Breast epithelium (tissue), 4 donors: ENCODE measurements at regions of chr2 and their contacts with region 1.

Region 1: DNA sequence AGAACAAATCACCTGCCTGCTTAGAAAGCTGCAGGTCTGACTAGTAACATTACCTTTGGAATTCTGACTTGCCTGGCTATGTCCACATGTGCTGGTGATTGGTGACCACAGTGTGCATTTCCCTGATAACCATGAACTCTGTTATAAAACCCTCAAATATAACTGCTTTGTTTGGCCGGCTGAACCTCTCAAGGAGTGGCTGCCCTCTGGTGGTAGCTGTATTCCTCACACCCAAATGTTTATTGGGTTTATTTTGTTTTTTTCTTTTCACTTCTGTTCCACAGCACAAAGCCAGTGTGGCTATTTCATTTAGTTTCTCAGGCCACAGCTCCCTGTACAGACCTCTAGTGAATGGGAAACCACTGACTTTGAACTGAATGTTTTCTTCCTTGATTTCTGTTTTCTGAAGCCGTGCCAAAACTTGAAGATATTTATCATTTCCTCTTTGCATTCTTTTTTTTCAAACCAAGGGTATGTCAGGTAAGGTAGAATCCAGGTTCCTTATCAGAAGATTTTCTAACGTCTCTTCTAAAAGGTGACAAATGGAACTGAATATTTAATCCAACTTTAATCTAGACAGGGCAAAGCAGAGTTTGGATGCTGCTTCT is 549.0 kb upstream of the VRK2 start:
- DNase-seq: no peak
- H3K4me3 ChIP-seq: no peak overlapping the region
- H3K27ac ChIP-seq: no peak overlapping the region
- H3K4me1 ChIP-seq: no peaks in the 10 kb centered on the region
- H3K27me3 ChIP-seq: no peaks in the 10 kb centered on the region
- CTCF ChIP-seq: peak; percentile 34 to 59 (median 49)
- POLR2A ChIP-seq: no peak

Region 2: DNA sequence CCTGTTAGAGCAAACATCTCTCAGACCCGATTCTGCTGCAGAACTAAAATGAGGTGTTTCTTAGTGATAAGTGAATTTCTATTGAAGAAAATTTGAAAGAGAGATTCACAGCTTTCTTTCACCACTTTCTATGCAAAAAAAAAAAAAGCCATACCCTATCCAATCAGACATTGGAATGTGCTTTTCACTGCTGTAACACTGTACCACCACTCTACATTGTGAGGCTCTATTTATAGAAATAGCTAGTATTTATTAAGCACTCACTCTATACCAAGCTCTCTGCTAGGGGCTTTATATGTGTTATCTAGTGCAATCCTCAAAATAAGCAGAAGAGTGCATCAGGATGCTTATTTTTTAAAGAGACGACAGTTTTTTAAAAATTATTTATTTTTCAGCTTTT is 31.6 kb before region 1 on chr2:
- intact Hi-C with region 1: loop called (anchors 2 kb)
- DNase-seq: no peak
- H3K4me3 ChIP-seq: no peak overlapping the region
- H3K27ac ChIP-seq: no peak overlapping the region
- H3K4me1 ChIP-seq: no peaks in the 10 kb centered on the region
- H3K27me3 ChIP-seq: no peaks in the 10 kb centered on the region
- CTCF ChIP-seq: no peak
- POLR2A ChIP-seq: no peak